ENCODE measurements at regions of chr1 and their contacts with region 1.

Region 1: GRCh38 chr1:203216274-203217138 is 13.0 kb downstream of the CHIT1 start:
- DNase-seq: peak; percentile 55
- H3K4me3 Mint-ChIP-seq: no peak overlapping the region
- H3K27ac Mint-ChIP-seq: no peak overlapping the region
- H3K4me1 Mint-ChIP-seq: no peaks in the 10 kb centered on the region
- H3K27me3 Mint-ChIP-seq: peaks cover 16% of the 10 kb centered on the region

Region 2: GRCh38 chr1:203084588-203085502 is 131.7 kb before region 1 on chr1:
- CTCF ChIA-PET with region 1: interaction called, 12 read pairs
- POLR2A ChIA-PET with region 1: no interaction called
- DNase-seq: peak; percentile 45
- H3K4me3 Mint-ChIP-seq: no peak overlapping the region
- H3K27ac Mint-ChIP-seq: no peak overlapping the region
- H3K4me1 Mint-ChIP-seq: no peaks in the 10 kb centered on the region
- H3K27me3 Mint-ChIP-seq: peaks cover 14% of the 10 kb centered on the region

Region 3: DNA sequence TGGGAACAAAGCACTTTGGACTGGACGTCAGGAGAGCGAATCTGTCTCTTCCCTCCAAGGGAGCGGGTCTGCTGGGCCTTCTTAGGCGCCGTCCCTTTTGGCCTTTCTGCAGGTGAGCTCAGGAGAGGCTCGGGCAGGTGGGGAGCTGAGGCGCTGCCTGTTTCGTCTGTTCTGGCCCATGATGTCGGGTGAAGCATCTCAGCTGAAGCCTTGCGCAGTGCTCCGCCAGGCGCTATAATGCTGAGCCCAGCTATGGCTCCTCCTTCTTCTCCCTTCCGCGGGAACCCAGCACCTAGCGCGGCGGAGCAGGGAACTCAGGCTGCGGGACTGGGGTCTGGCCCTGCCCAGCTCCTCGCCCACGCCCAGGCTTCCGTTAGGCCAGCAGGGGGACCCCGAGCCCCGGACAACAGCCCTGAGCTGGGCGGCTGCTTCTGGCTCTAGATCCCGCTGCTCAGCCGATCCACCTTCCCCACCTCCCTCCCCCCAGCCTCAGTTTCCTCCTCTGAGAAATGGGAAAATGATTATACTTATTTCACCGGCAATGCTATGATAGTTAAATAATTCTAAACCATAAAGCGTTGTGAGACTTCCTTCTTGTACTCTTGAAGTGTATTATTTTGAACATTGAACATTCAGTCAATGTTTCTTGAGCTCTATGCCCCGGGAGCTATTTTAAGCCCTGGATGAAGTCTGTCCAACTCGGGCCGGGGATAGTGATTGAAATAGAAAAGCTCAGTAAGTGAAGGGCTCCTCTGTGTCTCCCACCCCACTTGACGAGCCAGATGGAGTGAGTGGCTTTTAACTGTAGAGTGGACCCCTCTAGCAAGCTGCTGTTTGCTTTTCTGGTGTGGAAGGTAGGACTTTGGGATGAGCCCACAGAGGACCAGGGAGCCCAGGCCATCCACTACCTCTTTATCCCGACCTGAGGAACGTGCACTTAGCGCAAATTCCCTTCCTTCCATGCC is 98.6 kb before region 1 on chr1:
- CTCF ChIA-PET with region 1: interaction called, 26 read pairs
- POLR2A ChIA-PET with region 1: no interaction called
- DNase-seq: peak; percentile 48
- H3K4me3 Mint-ChIP-seq: no peak overlapping the region
- H3K27ac Mint-ChIP-seq: no peak overlapping the region
- H3K4me1 Mint-ChIP-seq: peaks cover 14% of the 10 kb centered on the region
- H3K27me3 Mint-ChIP-seq: peaks cover 52% of the 10 kb centered on the region

Region 4: DNA sequence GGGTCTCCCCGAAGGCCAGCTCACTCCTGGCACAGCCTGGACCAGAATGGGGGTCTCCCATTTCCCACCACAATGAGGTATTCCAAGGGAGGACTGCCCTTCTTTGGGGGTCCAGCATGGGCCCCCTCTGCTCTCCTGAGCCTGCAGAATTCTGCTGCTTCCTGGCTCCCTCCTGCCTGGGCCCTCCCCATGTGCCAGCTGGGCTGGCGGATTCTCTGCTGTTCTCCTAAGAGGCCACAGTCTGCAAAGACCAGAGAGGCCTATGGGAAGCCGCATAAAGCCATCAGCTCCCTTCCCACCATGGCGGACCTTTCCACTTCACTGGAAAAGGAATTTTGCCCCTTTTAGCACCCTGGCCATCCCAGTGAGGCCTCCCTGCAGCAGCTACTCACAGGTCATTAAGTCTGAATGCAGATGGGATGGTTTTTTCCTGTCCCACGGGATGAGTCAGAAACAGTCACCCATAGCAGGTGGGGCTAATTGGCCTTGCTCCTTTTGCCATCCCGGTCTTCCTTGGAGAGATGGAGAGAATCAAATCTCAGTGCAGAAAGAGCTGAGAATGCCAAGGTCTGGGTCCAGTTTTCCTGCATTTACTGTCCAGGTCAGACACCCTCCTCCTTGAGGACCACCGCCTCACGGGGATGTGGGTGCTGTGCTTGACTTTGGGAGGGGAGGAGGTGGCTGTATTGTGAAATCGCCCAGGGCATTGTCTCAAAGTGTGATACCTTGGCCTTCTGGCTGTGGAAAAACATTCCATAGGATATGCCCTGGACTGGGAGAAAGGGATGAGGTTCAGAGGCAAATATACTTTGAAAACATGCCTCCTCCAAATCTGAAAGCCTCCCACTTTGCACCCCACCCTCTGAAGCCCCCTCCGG is 64.1 kb before region 1 on chr1:
- CTCF ChIA-PET with region 1: no interaction called
- POLR2A ChIA-PET with region 1: no interaction called
- DNase-seq: no peak
- H3K4me3 Mint-ChIP-seq: no peak overlapping the region
- H3K27ac Mint-ChIP-seq: no peak overlapping the region
- H3K4me1 Mint-ChIP-seq: no peaks in the 10 kb centered on the region
- H3K27me3 Mint-ChIP-seq: peaks cover 17% of the 10 kb centered on the region

Measured in activated CD4-positive, alpha-beta memory T cell treated with anti-CD3 and anti-CD28 coated beads, Interleukin-2, amount 10 ng/mL, durations not matched to agents 7 days and 5 days (primary cell).